GM12878 (cell line): ENCODE measurements at regions of chr1 and their contacts with region 1.

Region 1: GRCh38 chr1:204431310-204432165 is 19.9 kb upstream of the PPP1R15B start:
- DNase-seq: no peak
- ATAC-seq: peak; percentile 99
- H3K4me3 ChIP-seq: no peak overlapping the region
- H3K27ac ChIP-seq: no peak overlapping the region
- H3K4me1 ChIP-seq: no peaks in the 10 kb centered on the region
- H3K27me3 ChIP-seq: no peaks in the 10 kb centered on the region
- CTCF ChIP-seq: peak; percentile 86 to 95 (median 94)
- EP300 ChIP-seq: no peak
- POLR2A ChIP-seq: no peak
- RAD21 ChIP-seq: peak; percentile 60

Region 2: DNA sequence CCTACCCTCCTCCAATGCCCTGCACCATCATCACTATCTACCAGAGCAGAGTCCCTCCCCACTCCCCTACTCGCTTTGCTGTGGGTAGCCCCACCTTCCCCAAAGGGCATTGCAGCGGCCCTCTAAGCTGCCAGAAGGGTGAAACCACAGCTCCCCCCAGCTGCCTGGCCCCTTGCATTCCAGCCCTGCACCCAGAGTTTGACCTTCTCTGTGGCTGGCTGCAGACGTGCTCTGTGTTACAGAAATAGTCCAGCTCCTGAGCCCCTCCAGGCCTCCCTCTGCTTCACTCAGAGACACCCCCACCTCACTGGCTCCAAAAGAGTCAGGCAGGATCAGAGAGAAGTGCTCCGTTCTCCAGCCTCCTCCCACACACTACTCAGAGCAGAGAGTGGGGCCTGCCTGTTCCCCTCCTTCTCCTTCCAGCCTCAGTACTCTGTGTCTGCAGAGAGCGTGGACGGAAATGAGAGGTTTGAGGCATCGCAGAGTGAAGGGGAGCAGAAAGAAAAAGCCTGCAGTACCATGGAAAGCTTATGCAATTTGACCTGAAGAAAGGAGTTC is 135.0 kb before region 1 on chr1:
- CTCF ChIA-PET with region 1: no interaction called
- POLR2A ChIA-PET with region 1: no interaction called
- RAD21 ChIA-PET with region 1: no interaction called
- SMC1A ChIA-PET with region 1: no interaction called
- in situ Hi-C with region 1: no loop called
- intact Hi-C with region 1: no loop called
- DNase-seq: no peak
- ATAC-seq: peak; percentile 31
- H3K4me3 ChIP-seq: no peak overlapping the region
- H3K27ac ChIP-seq: no peak overlapping the region
- H3K4me1 ChIP-seq: no peaks in the 10 kb centered on the region
- H3K27me3 ChIP-seq: peaks cover 5 to 6% of the 10 kb centered on the region in 2 experiments
- CTCF ChIP-seq: no peak
- EP300 ChIP-seq: no peak
- POLR2A ChIP-seq: no peak
- RAD21 ChIP-seq: no peak

Region 3: GRCh38 chr1:204411451-204412204 is 19.9 kb before region 1 on chr1 and contains the start of gene PPP1R15B:
- CTCF ChIA-PET with region 1: interaction called, 21 read pairs
- POLR2A ChIA-PET with region 1: interaction called, 3 read pairs
- RAD21 ChIA-PET with region 1: interaction called, 11 read pairs
- SMC1A ChIA-PET with region 1: interaction called, 7 read pairs
- in situ Hi-C with region 1: no loop called
- intact Hi-C with region 1: no loop called
- DNase-seq: peak; percentile 98
- ATAC-seq: peak; percentile 94
- H3K4me3 ChIP-seq: peak within 1 kb of the TSS; percentile 87
- H3K27ac ChIP-seq: peak within 1 kb of the TSS; percentile 99
- H3K4me1 ChIP-seq: no peaks in the 10 kb centered on the region
- H3K27me3 ChIP-seq: no peaks in the 10 kb centered on the region
- CTCF ChIP-seq: no peak
- EP300 ChIP-seq: 0 out of 4 replicates have a peak, but pooled peaks of 1 of the 2 experiments have one; percentile 29
- POLR2A ChIP-seq: peak; percentile 96
- RAD21 ChIP-seq: no peak
- polyA plus RNA-seq, gene PPP1R15B: 13.9 to 17.1 TPM

Region 4: DNA sequence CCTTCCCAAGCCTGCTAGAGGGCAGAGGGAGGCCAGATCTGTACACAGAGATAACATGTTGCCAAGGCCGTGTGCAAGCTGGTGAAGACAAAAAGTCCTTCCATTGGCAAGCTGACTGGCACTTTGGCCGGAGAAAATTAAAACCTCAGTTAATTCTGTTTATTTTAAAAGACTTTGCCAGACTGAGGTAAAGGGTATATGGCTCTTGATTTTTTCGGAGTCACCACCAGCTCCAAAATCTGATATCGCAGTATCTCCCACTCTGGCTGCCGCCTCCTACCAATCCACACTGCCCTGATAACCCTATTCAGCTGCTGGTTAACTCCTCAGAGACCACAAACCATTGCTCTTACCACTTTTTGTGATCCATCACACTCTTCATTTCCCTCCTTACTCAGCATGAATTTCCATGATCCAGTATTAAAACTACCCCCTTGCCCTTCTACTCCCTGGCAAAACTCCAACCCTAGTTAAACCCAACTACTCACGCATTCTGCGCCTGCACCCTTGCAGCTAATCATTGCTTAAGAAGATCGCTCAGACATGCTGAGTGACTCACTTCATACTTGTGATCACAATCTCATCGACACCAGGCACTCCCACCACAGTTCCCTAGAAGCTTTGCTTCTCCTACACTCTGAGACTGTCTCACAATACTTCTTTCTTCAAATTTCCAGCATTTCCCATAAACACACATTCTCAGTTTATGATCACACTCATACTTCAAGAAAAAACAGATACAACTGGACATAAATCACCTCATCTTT is 14.1 kb before region 1 on chr1:
- CTCF ChIA-PET with region 1: interaction called, 61 read pairs
- POLR2A ChIA-PET with region 1: no interaction called
- RAD21 ChIA-PET with region 1: interaction called, 5 read pairs
- SMC1A ChIA-PET with region 1: interaction called, 16 read pairs
- in situ Hi-C with region 1: no loop called
- intact Hi-C with region 1: no loop called
- DNase-seq: no peak
- ATAC-seq: no peak
- H3K4me3 ChIP-seq: no peak overlapping the region
- H3K27ac ChIP-seq: no peak overlapping the region
- H3K4me1 ChIP-seq: peaks cover 7% of the 10 kb centered on the region; the same call in 1 of the 2 replicates
- H3K27me3 ChIP-seq: no peaks in the 10 kb centered on the region
- CTCF ChIP-seq: no peak
- EP300 ChIP-seq: no peak
- POLR2A ChIP-seq: no peak
- RAD21 ChIP-seq: no peak

Region 5: GRCh38 chr1:204446370-204447111 is 15.0 kb after region 1 on chr1:
- CTCF ChIA-PET with region 1: interaction called, 106 read pairs
- POLR2A ChIA-PET with region 1: interaction called, 3 read pairs
- RAD21 ChIA-PET with region 1: interaction called, 19 read pairs
- SMC1A ChIA-PET with region 1: interaction called, 13 read pairs
- in situ Hi-C with region 1: no loop called
- intact Hi-C with region 1: no loop called
- DNase-seq: no peak
- ATAC-seq: peak; percentile 98
- H3K4me3 ChIP-seq: no peak overlapping the region
- H3K27ac ChIP-seq: no peak overlapping the region
- H3K4me1 ChIP-seq: peaks cover 5% of the 10 kb centered on the region
- H3K27me3 ChIP-seq: no peaks in the 10 kb centered on the region
- CTCF ChIP-seq: peak; percentile 80 to 92 (median 89); a peak in 5 of 6 replicates
- EP300 ChIP-seq: no peak
- POLR2A ChIP-seq: no peak
- RAD21 ChIP-seq: peak; percentile 99

Region 6: GRCh38 chr1:204453141-204453772 is 21.7 kb after region 1 on chr1:
- CTCF ChIA-PET with region 1: interaction called, 106 read pairs
- POLR2A ChIA-PET with region 1: no interaction called
- RAD21 ChIA-PET with region 1: interaction called, 19 read pairs
- SMC1A ChIA-PET with region 1: interaction called, 10 read pairs
- in situ Hi-C with region 1: no loop called
- intact Hi-C with region 1: no loop called
- DNase-seq: peak; percentile 84
- ATAC-seq: peak; percentile 97
- H3K4me3 ChIP-seq: 0 out of 2 replicates have a peak overlapping the region, but pooled peaks have one; percentile 9
- H3K27ac ChIP-seq: peak overlapping the region; percentile 81
- H3K4me1 ChIP-seq: peaks cover 17% of the 10 kb centered on the region
- H3K27me3 ChIP-seq: no peaks in the 10 kb centered on the region
- CTCF ChIP-seq: no peak
- EP300 ChIP-seq: no peak; a peak in 1 of 4 replicates
- POLR2A ChIP-seq: no peak
- RAD21 ChIP-seq: no peak

Region 7: GRCh38 chr1:204494281-204495077 is 62.9 kb after region 1 on chr1 and contains the start of gene PIK3C2B:
- CTCF ChIA-PET with region 1: interaction called, 2,021 read pairs
- POLR2A ChIA-PET with region 1: interaction called, 3 read pairs
- RAD21 ChIA-PET with region 1: interaction called, 23 read pairs
- SMC1A ChIA-PET with region 1: interaction called, 939 read pairs
- in situ Hi-C with region 1: no loop called
- intact Hi-C with region 1: loop called (anchors 1 kb)
- DNase-seq: peak; percentile 55
- ATAC-seq: peak; percentile 92
- H3K4me3 ChIP-seq: peak within 1 kb of the TSS; percentile 92
- H3K27ac ChIP-seq: peak within 1 kb of the TSS; percentile 86
- H3K4me1 ChIP-seq: peaks cover 22% of the 10 kb centered on the region
- H3K27me3 ChIP-seq: no peaks in the 10 kb centered on the region
- CTCF ChIP-seq: peak; percentile 37 to 59 (median 43)
- EP300 ChIP-seq: no peak
- POLR2A ChIP-seq: peak; percentile 86
- RAD21 ChIP-seq: peak; percentile 47
- polyA plus RNA-seq, gene PIK3C2B: 2.2 to 5.0 TPM